CD8-positive, alpha-beta memory T cell (primary cell): ENCODE measurements at regions of chr3 and their contacts with region 1.

Region 1: GRCh38 chr3:129490242-129491045 is 38.0 kb upstream of the RHO start:
- DNase-seq: peak; percentile 31 to 72 (median 46)
- H3K4me3 ChIP-seq: no peak overlapping the region
- H3K4me3 Mint-ChIP-seq: no peak overlapping the region
- H3K27ac ChIP-seq: no peak overlapping the region
- H3K27ac Mint-ChIP-seq: peak overlapping the region in 5 of 8 donors; percentile 8 to 80 (median 30)
- H3K4me1 ChIP-seq: no peaks in the 10 kb centered on the region
- H3K4me1 Mint-ChIP-seq: peaks cover 2 to 4% (median 3%) of the 10 kb centered on the region in 3 donors
- H3K27me3 ChIP-seq: no peaks in the 10 kb centered on the region
- H3K27me3 Mint-ChIP-seq: no peaks in the 10 kb centered on the region

Region 2: GRCh38 chr3:129576514-129577352 is 86.3 kb after region 1 on chr3:
- CTCF ChIA-PET with region 1: interaction called, 12 read pairs
- POLR2A ChIA-PET with region 1: interaction called, 3 read pairs
- DNase-seq: peak; percentile 69 to 92 (median 83)
- H3K4me3 ChIP-seq: no peak overlapping the region
- H3K4me3 Mint-ChIP-seq: peak overlapping the region; percentile 50 to 86 (median 68)
- H3K27ac ChIP-seq: peak overlapping the region; percentile 16
- H3K27ac Mint-ChIP-seq: peak overlapping the region; percentile 87 to 100 (median 98)
- H3K4me1 ChIP-seq: peaks cover 47% of the 10 kb centered on the region
- H3K4me1 Mint-ChIP-seq: peaks cover 57 to 77% (median 61%) of the 10 kb centered on the region in 3 donors
- H3K27me3 ChIP-seq: no peaks in the 10 kb centered on the region
- H3K27me3 Mint-ChIP-seq: no peaks in the 10 kb centered on the region

Region 3: GRCh38 chr3:129596194-129597086 is 106.0 kb after region 1 on chr3:
- CTCF ChIA-PET with region 1: interaction called, 43 read pairs
- POLR2A ChIA-PET with region 1: no interaction called
- DNase-seq: no peak
- H3K4me3 ChIP-seq: no peak overlapping the region
- H3K4me3 Mint-ChIP-seq: peak overlapping the region in 4 of 7 donors; percentile 3 to 49 (median 46)
- H3K27ac ChIP-seq: peak overlapping the region; percentile 2
- H3K27ac Mint-ChIP-seq: peak overlapping the region in 6 of 8 donors; percentile 6 to 88 (median 62)
- H3K4me1 ChIP-seq: peaks cover 25% of the 10 kb centered on the region
- H3K4me1 Mint-ChIP-seq: peaks cover 58 to 80% (median 66%) of the 10 kb centered on the region in 3 donors
- H3K27me3 ChIP-seq: no peaks in the 10 kb centered on the region
- H3K27me3 Mint-ChIP-seq: peaks cover 0 to 9% of the 10 kb centered on the region in 2 donors

Region 4: DNA sequence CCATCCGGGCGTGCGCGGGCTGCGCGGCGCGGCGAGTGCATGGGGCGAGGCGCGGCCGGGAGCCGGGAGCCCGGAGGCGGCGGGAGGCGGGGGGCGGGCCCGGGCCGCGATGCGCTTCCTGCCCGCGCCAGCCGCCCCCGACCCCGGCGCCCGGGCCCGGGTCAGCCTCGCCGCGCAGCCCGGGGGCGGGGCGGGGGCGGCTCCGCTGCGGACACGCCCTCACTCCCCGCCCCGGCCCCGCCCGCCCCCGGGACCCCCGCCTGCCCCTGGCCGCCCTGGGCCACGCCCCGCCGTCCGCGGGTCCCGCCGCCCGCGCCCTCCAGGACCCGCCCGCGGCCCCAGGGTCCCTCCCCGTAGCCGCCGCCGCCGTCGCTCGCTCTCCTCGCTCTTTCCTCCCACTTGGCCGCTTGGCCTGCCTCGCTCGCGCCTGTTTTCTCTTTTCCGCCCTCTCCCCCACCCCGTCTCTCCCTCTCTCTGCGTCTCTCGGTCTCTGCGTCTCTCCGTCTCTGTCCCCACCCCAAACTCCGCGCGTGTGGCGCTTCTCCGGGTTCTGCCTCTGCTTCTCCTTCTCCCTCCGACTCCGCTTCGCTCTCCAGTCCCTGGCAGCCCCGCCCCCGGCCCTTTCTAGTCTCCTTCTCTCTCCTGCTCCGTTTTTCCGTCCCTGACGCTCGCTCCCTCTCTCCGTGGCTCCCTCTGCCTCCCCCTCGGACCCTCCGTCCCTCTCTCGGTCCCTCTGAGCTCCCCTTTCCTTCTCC is 116.4 kb after region 1 on chr3 and contains the start of gene PLXND1:
- CTCF ChIA-PET with region 1: interaction called, 43 read pairs
- POLR2A ChIA-PET with region 1: no interaction called
- DNase-seq: peak; percentile 30 to 71 (median 53)
- H3K4me3 ChIP-seq: peak within 1 kb of the TSS; percentile 47
- H3K4me3 Mint-ChIP-seq: peak within 1 kb of the TSS; percentile 91 to 98 (median 94)
- H3K27ac ChIP-seq: peak within 1 kb of the TSS; percentile 24
- H3K27ac Mint-ChIP-seq: peak within 1 kb of the TSS; percentile 77 to 96 (median 92)
- H3K4me1 ChIP-seq: peaks cover 4% of the 10 kb centered on the region
- H3K4me1 Mint-ChIP-seq: peaks cover 34 to 54% (median 35%) of the 10 kb centered on the region in 3 donors
- H3K27me3 ChIP-seq: no peaks in the 10 kb centered on the region
- H3K27me3 Mint-ChIP-seq: peaks cover 3 to 4% of the 10 kb centered on the region in 2 donors
- total RNA-seq, gene PLXND1: 12.1 to 15.2 TPM

Region 5: DNA sequence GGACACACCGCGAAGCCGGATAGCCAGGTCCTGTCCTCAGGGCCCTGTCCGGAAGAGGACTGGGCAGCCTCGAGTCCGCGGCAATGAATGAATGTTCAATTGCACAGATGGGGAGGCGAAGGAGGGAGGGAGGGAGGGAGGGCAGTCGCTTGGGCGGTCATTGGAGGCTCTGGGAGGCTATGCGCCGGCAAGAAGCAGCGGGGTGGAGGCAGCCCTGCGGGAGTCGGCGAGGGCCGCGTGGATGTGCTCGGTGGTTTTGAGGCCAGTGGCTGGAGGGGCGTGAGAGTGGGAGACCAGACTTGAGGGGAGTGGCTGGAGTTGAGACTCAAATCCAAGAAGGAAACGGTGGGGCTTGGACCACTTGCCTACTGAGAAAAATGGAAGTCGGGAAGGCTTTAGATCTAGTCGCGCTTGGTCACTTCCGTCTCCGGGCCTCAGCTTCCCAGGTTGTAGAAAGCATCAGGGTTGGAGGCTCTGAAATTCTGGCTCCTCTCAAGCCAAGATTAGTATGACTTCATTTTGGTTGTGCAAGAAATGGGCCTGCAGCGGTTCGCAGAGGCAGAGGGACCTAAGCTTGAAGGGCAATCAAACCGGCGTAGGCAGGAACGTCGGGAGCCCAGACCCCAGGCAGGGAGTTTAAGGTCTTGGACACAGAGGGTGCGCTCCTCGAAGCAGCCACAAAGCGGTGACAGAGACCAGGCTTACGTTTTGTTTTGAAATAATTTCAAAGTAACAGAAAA is 137.2 kb after region 1 on chr3:
- CTCF ChIA-PET with region 1: interaction called, 31 read pairs
- POLR2A ChIA-PET with region 1: interaction called, 4 read pairs
- DNase-seq: peak; percentile 44 to 78 (median 55)
- H3K4me3 ChIP-seq: peak overlapping the region; percentile 75
- H3K4me3 Mint-ChIP-seq: peak overlapping the region; percentile 85 to 94 (median 89)
- H3K27ac ChIP-seq: peak overlapping the region; percentile 43
- H3K27ac Mint-ChIP-seq: peak overlapping the region; percentile 16 to 91 (median 80)
- H3K4me1 ChIP-seq: peaks cover 13% of the 10 kb centered on the region
- H3K4me1 Mint-ChIP-seq: peaks cover 16 to 22% (median 20%) of the 10 kb centered on the region in 3 donors
- H3K27me3 ChIP-seq: no peaks in the 10 kb centered on the region
- H3K27me3 Mint-ChIP-seq: peaks cover 0 to 1% of the 10 kb centered on the region in 2 donors

Region 6: GRCh38 chr3:129824926-129825541 is 334.6 kb after region 1 on chr3:
- CTCF ChIA-PET with region 1: interaction called, 69 read pairs
- POLR2A ChIA-PET with region 1: no interaction called
- DNase-seq: peak; percentile 13 to 62 (median 39)
- H3K4me3 ChIP-seq: no peak overlapping the region
- H3K4me3 Mint-ChIP-seq: no peak overlapping the region
- H3K27ac ChIP-seq: no peak overlapping the region
- H3K27ac Mint-ChIP-seq: peak overlapping the region in 4 of 8 donors; percentile 4 to 64 (median 34)
- H3K4me1 ChIP-seq: peaks cover 14% of the 10 kb centered on the region
- H3K4me1 Mint-ChIP-seq: peaks cover 19 to 33% (median 26%) of the 10 kb centered on the region in 3 donors
- H3K27me3 ChIP-seq: no peaks in the 10 kb centered on the region
- H3K27me3 Mint-ChIP-seq: peaks cover 0 to 2% of the 10 kb centered on the region in 2 donors